Activated T-helper 2 cell treated with anti-CD3 and anti-CD28 coated beads, Interferon-gamma antibody, Interleukin-2, Interleukin-4, amounts not matched to agents 10 μg/mL and 5 μg/mL and 100 μg/mL, durations not matched to agents 14 hours and 24 hours and 36 hours (primary cell): ENCODE measurements at regions of chr4 and their contacts with region 1.

Region 1: DNA sequence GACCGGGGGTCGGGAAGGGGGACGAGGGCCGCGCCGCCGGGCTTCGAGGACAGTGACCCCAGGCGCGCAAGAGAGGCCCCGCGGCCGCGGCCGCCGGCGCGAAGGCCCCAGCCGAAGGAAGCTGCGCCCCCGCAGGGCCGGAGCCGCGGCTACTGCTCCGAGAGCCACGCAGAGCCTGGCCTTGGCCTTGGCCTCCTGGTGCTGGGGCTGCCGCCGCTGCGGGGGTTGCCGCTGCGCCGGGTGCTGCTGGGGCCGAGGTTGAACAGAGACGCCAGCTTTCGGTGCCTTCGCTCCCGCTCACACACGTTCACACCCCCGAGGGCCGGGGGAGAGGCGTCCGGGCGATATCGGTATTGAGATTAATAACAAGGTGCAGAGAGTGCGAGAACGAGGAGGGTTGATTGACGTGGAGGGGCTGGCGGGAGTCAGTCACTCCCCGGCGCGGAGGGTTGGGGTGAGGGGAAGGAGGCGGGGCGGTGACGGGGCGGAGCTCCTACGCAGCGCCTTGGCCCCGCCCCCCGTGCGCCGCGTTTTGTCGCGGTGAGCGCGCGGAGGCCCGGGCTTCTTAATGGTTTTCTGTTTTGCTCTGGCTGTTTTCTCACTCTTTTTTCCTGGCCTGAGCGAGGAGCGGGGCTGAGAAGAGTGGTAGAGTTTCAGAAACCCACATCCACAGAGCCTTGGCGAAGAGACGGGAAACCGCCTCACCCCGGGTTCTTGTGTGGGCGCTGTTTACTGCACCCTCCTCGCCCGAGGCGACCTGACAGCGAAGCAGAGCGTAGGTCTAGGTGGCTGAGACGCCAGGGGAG is 878 bp upstream of the CNOT6L start:
- DNase-seq: peak; percentile 92
- H3K4me3 Mint-ChIP-seq: peak overlapping the region; percentile 87
- H3K27ac Mint-ChIP-seq: peak overlapping the region; percentile 99
- H3K4me1 Mint-ChIP-seq: peaks cover 35% of the 10 kb centered on the region
- H3K27me3 Mint-ChIP-seq: no peaks in the 10 kb centered on the region

Region 2: GRCh38 chr4:77629885-77630284 is 190.2 kb before region 1 on chr4:
- intact Hi-C with region 1: loop called (anchors 1 kb)
- DNase-seq: no peak
- H3K4me3 Mint-ChIP-seq: no peak overlapping the region
- H3K27ac Mint-ChIP-seq: peak overlapping the region; percentile 34
- H3K4me1 Mint-ChIP-seq: peaks cover 16% of the 10 kb centered on the region
- H3K27me3 Mint-ChIP-seq: peaks cover 2% of the 10 kb centered on the region

Region 3: GRCh38 chr4:77734928-77735327 is 85.1 kb before region 1 on chr4:
- intact Hi-C with region 1: loop called (anchors 2 kb)
- DNase-seq: peak; percentile 50
- H3K4me3 Mint-ChIP-seq: peak overlapping the region; percentile 62
- H3K27ac Mint-ChIP-seq: peak overlapping the region; percentile 70
- H3K4me1 Mint-ChIP-seq: peaks cover 43% of the 10 kb centered on the region
- H3K27me3 Mint-ChIP-seq: no peaks in the 10 kb centered on the region

Region 4: DNA sequence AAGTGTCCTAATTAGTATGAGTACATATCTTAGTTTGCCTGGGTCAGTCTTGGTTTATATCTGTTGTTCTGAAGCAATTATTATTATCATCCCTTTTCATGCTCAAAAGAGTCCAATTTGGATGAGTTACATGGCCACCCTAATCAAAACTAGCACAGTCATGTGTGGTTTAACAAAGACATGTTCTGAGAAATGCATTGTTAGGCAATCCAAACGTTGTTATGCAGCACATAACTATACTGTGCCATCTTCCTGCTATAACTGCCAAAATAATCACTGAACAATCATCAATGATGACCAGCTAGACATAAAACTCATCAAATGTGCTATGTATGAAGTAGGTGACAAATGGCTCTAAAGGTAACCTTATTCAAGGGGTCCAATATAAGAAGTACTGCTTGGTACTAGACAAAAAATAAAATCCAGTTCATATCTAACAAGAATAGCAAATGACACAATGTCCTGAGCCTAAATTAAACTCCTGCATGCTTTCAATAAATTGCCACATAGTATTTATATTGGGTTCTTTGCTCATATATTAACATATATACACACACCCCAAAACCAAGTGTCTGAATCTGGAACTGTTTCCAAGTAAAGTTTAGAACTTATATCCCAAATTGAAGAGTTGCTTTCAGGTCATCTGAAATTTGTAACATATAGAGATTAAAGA is 42.8 kb before region 1 on chr4:
- intact Hi-C with region 1: no loop called
- DNase-seq: no peak
- H3K4me3 Mint-ChIP-seq: no peak overlapping the region
- H3K27ac Mint-ChIP-seq: no peak overlapping the region
- H3K4me1 Mint-ChIP-seq: peaks cover 20% of the 10 kb centered on the region
- H3K27me3 Mint-ChIP-seq: no peaks in the 10 kb centered on the region

Region 5: GRCh38 chr4:77800483-77801259 is 19.4 kb before region 1 on chr4:
- intact Hi-C with region 1: loop called (anchors 1 kb)
- DNase-seq: no peak
- H3K4me3 Mint-ChIP-seq: peak overlapping the region; percentile 70
- H3K27ac Mint-ChIP-seq: peak overlapping the region; percentile 89
- H3K4me1 Mint-ChIP-seq: peaks cover 32% of the 10 kb centered on the region
- H3K27me3 Mint-ChIP-seq: no peaks in the 10 kb centered on the region

Region 6: DNA sequence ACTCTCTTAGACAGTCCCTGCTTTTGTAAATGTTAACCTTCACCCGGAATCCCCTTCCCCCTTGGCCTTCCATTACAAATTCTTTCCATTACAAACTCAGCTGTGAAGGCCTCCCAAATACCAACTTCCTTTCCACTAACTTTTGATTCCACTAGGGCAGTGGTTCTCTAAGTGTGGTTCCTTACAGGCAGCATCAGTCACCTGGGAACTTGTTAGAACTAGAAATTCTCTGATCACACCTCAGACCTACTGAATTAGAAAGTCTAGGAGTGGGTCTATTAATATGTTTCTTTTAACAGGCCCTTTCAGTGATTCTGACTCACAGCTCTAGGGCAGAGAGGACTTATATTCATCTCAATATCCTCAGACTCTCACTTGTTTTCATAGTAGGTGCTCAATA is 23.6 kb after region 1 on chr4:
- intact Hi-C with region 1: loop called (anchors 1 kb)
- DNase-seq: no peak
- H3K4me3 Mint-ChIP-seq: no peak overlapping the region
- H3K27ac Mint-ChIP-seq: peak overlapping the region; percentile 81
- H3K4me1 Mint-ChIP-seq: peaks cover 23% of the 10 kb centered on the region
- H3K27me3 Mint-ChIP-seq: no peaks in the 10 kb centered on the region

Region 7: DNA sequence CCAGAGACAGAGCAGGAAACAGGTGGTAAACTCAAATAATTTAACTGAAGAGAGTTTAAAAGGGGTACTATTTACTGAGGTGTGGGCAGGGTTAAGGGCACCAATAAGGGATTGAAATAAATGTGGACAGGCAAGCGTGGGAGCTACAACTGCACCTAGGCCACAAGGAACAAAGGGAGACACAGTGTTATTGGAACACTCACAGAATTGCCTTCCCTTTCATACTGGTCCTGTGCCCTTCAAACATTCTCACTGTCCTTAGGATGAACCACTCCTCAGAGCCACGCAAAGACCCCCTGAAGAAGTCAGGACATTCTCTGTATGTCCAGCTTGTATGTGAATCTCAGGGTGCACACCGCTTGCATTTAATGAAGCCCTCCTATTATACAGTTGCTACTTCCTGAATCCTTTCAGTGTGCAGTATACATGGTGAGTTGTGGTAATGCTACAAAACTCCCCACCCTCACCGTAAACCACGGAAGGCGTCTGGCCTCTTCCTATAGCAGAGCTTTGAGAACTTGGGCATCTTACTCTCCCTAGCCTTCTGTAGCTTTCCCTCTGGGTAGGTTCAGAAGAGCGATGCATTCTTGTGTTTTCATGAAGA is 32.9 kb after region 1 on chr4:
- intact Hi-C with region 1: loop called (anchors 1 kb)
- DNase-seq: peak; percentile 70
- H3K4me3 Mint-ChIP-seq: peak overlapping the region; percentile 72
- H3K27ac Mint-ChIP-seq: peak overlapping the region; percentile 93
- H3K4me1 Mint-ChIP-seq: peaks cover 52% of the 10 kb centered on the region
- H3K27me3 Mint-ChIP-seq: no peaks in the 10 kb centered on the region